CD8-positive, alpha-beta memory T cell (primary cell): ENCODE measurements at regions of chr19 and their contacts with region 1.

Region 1: DNA sequence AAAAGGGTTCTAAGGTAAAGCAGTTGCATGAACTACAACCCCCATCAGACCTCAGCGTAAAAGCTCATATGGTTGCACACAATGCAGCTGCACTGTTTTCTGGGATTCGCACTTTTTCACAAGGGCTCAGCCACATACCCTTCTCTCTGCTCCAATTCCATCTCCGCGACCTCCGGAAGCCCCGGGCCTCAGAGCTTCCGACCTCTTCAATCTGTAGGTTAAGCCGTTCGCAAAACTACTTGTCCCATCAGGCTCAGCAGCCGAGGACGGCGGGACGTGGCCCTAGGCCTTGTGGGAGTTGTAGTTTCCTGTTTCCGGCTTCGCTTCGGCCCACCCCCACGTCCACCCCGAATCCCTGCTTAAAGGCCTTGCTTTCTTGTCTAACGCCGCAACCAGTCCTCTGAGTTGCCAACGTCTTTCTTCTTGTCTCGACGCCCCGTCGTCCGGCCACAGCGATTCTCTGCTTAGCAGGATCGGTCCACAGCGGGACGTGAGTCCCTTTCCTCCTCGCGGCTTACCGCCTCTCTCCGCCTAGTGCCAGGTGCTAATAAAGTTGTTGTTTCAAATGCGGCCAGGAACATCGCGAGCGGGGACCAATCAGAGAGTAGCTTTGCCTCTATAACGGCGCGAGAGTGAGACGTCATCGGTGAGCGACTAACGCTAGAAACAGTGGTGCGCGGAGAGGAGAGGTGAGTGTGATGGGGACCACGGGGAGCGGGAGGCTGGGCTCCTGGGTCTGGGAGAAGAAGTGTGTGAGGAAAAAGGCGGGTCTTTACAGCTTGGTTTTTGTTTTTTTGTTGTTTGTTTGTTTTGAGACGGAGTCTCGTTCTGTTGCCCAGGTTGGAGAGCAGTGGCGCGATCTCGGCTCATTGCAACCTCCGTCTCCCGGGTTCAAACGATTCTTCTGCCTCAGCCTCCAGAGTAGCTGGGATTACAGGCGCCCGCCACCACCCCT is at the starts of genes PRPF31 and TFPT:
- DNase-seq: peak; percentile 90 to 98 (median 96)
- H3K4me3 ChIP-seq: peak within 1 kb of the TSS; percentile 97
- H3K4me3 Mint-ChIP-seq: peak within 1 kb of the TSS; percentile 85 to 96 (median 93)
- H3K27ac ChIP-seq: peak within 1 kb of the TSS; percentile 80
- H3K27ac Mint-ChIP-seq: peak within 1 kb of the TSS; percentile 72 to 99 (median 92)
- H3K4me1 ChIP-seq: peaks cover 28% of the 10 kb centered on the region
- H3K4me1 Mint-ChIP-seq: peaks cover 37 to 50% (median 43%) of the 10 kb centered on the region in 3 donors
- H3K27me3 ChIP-seq: no peaks in the 10 kb centered on the region
- H3K27me3 Mint-ChIP-seq: peaks cover 0 to 2% of the 10 kb centered on the region in 2 donors
- total RNA-seq, gene PRPF31: 123 to 132 TPM
- total RNA-seq, gene TFPT: 32.9 to 33.1 TPM

Region 2: GRCh38 chr19:54062643-54063042 is 52.7 kb before region 1 on chr19:
- CTCF ChIA-PET with region 1: no interaction called
- POLR2A ChIA-PET with region 1: no interaction called
- DNase-seq: no peak
- H3K4me3 ChIP-seq: no peak overlapping the region
- H3K4me3 Mint-ChIP-seq: no peak overlapping the region
- H3K27ac ChIP-seq: no peak overlapping the region
- H3K27ac Mint-ChIP-seq: no peak overlapping the region
- H3K4me1 ChIP-seq: no peaks in the 10 kb centered on the region
- H3K4me1 Mint-ChIP-seq: no peaks in the 10 kb centered on the region
- H3K27me3 ChIP-seq: no peaks in the 10 kb centered on the region
- H3K27me3 Mint-ChIP-seq: peaks cover 15 to 24% of the 10 kb centered on the region in 2 donors

Region 3: GRCh38 chr19:54096617-54097129 is 18.7 kb before region 1 on chr19:
- CTCF ChIA-PET with region 1: no interaction called
- POLR2A ChIA-PET with region 1: interaction called, 19 read pairs
- DNase-seq: peak in 2 of 5 donors; percentile 35 to 54
- H3K4me3 ChIP-seq: no peak overlapping the region
- H3K4me3 Mint-ChIP-seq: peak overlapping the region; percentile 30 to 88 (median 72)
- H3K27ac ChIP-seq: no peak overlapping the region
- H3K27ac Mint-ChIP-seq: peak overlapping the region; percentile 35 to 92 (median 78)
- H3K4me1 ChIP-seq: peaks cover 11% of the 10 kb centered on the region
- H3K4me1 Mint-ChIP-seq: peaks cover 13 to 27% (median 24%) of the 10 kb centered on the region in 3 donors
- H3K27me3 ChIP-seq: no peaks in the 10 kb centered on the region
- H3K27me3 Mint-ChIP-seq: peaks cover 9 to 10% of the 10 kb centered on the region in 2 donors

Region 4: GRCh38 chr19:54102421-54103169 is 12.8 kb before region 1 on chr19 and contains the start of gene NDUFA3:
- CTCF ChIA-PET with region 1: interaction called, 5 read pairs
- POLR2A ChIA-PET with region 1: interaction called, 19 read pairs
- DNase-seq: peak; percentile 96 to 100 (median 97)
- H3K4me3 ChIP-seq: peak within 1 kb of the TSS; percentile 91
- H3K4me3 Mint-ChIP-seq: peak within 1 kb of the TSS; percentile 86 to 100 (median 98)
- H3K27ac ChIP-seq: peak within 1 kb of the TSS; percentile 76
- H3K27ac Mint-ChIP-seq: peak within 1 kb of the TSS; percentile 65 to 99 (median 97)
- H3K4me1 ChIP-seq: peaks cover 11% of the 10 kb centered on the region
- H3K4me1 Mint-ChIP-seq: peaks cover 21 to 37% (median 30%) of the 10 kb centered on the region in 3 donors
- H3K27me3 ChIP-seq: no peaks in the 10 kb centered on the region
- H3K27me3 Mint-ChIP-seq: no peaks in the 10 kb centered on the region
- total RNA-seq, gene NDUFA3: 117 to 124 TPM

Region 5: DNA sequence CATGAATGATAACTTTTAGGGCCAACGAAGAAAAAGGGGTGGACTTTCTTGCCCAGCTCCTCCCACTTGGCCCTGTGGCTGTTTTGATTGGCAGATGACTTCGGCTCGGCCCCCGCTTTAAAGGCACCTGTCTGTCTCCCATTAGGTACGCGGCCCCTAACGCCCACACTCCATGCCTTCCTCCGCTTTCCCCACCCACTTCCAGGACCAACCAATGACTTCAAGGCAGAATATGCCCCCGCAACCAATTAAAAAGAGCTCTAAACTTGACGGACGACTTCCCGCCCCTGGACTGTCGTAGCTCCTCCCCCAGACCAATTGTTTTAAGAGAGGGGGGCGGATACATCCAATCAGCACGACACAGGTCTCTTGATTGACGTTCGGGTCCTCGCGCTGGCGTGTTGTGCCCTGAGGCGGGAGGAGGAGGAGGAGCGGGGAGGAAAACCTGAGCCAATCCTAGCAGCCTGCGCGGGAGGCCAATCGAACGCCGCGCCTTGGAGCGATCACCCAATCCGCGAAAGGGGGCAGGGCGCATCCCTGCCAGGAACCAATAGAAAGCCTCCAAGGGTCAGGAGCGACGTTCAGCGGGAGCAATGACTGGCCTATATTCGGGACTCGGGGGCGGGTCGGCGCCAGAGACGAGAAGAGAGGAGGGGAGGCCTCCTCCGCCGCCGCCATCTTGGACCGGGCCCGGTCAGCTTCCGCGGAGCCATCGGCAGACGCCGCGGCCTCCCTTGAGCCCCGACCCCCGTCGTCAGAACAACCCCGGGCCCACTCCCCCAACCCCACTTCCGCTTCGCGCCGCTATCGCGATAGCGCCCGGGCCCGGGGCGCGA is 21.9 kb after region 1 on chr19 and contains the start of gene CNOT3:
- CTCF ChIA-PET with region 1: interaction called, 7 read pairs
- POLR2A ChIA-PET with region 1: interaction called, 36 read pairs
- DNase-seq: peak; percentile 99 to 100 (median 100)
- H3K4me3 ChIP-seq: peak within 1 kb of the TSS; percentile 87
- H3K4me3 Mint-ChIP-seq: peak within 1 kb of the TSS; percentile 84 to 94 (median 90)
- H3K27ac ChIP-seq: peak within 1 kb of the TSS; percentile 90
- H3K27ac Mint-ChIP-seq: peak within 1 kb of the TSS; percentile 87 to 98 (median 92)
- H3K4me1 ChIP-seq: peaks cover 39% of the 10 kb centered on the region
- H3K4me1 Mint-ChIP-seq: peaks cover 40 to 56% (median 54%) of the 10 kb centered on the region in 3 donors
- H3K27me3 ChIP-seq: no peaks in the 10 kb centered on the region
- H3K27me3 Mint-ChIP-seq: peaks cover 0 to 1% of the 10 kb centered on the region in 2 donors
- total RNA-seq, gene CNOT3: 75.1 to 81.7 TPM

Region 6: DNA sequence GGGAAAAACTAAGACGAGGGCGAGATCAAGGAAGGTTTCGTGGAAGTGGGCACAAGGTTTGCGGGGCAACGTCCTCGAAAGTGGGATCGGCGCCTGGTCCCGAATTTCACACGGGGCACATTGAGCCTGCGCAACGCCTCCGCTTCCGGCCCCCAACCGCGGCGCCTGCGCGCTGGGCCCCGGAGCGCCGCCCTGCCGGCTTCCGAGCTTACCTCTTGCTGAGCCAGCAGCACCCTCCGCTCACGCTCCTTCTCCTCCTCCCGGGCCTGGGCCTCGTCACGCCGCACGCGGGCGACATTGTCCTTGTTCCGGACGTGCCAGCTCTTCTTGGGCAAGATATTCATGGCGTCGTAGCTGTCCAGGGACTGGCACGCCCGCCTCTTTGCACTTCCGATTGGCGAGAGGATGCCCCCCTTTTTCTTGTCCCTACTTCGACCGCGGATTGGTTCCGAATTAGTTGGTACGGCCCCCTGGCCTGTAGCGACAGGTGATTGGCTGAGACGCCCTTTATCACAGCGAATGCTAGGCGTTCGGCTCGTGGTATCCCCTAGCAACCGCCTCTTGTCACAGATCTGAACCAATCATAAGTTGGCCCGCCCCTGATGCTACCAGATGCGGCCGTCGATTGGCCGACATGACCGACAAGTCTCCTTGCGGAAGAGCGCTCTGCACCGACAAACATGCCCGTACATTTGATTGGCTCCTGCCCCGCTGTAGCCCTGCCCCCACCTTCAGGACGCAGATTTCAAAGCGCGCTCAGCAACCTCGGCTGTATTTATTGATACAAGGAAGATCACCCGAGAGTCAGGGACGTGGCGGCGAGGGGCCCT is 44.2 kb after region 1 on chr19 and contains the start of gene LENG1:
- CTCF ChIA-PET with region 1: interaction called, 4 read pairs
- POLR2A ChIA-PET with region 1: interaction called, 17 read pairs
- DNase-seq: peak; percentile 96 to 100 (median 99)
- H3K4me3 ChIP-seq: peak within 1 kb of the TSS; percentile 93
- H3K4me3 Mint-ChIP-seq: peak within 1 kb of the TSS; percentile 89 to 100 (median 99)
- H3K27ac ChIP-seq: peak within 1 kb of the TSS; percentile 85
- H3K27ac Mint-ChIP-seq: peak within 1 kb of the TSS; percentile 92 to 100 (median 99)
- H3K4me1 ChIP-seq: peaks cover 75% of the 10 kb centered on the region
- H3K4me1 Mint-ChIP-seq: peaks cover 57 to 76% (median 73%) of the 10 kb centered on the region in 3 donors
- H3K27me3 ChIP-seq: no peaks in the 10 kb centered on the region
- H3K27me3 Mint-ChIP-seq: peaks cover 4 to 6% of the 10 kb centered on the region in 2 donors
- total RNA-seq, gene LENG1: 4.8 to 6.8 TPM

Region 7: DNA sequence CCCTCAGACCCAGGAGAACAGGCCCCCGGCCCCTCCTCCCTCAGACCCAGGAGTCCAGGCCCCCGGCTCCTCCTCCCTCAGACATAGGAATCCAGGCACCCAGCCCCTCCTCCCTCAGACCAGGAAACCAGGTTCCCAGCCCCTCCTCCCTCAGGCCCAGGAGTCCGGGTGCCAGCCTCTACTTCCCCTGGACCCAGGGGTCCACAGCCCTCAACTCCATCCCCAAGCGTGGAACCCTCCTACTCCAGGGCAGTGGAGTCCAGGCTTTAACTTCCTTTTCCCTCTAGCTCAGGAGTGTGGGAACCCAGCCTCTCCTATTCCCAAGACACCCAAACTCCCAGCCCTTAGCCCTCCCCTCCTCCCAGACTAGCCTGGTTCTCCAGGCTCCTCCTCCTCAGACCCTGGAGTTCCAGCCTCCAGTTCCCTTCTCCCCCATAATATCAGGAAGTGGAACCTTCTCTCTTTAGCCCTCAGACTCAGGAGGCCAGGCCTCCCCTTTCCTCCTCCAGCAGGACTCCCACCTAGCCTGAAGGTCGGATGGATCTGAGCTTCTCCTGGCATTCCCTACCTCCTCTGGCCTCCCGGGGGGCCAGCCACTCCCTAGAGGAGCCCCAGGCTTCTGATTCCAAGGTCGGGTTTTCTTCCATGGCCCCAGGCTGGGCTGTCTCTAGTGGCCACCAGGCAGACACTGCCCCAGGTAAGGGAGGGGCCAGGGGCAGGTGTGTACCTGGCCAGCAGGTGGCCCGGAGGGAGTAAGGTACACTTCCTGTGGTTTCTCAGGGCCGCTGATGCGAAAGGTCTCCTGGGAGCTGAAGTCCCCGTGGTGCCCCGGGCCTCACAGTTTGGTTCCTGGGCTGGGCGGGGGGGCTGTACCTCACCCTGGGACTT is 57.3 kb after region 1 on chr19 and contains the start of gene TMC4:
- CTCF ChIA-PET with region 1: no interaction called
- POLR2A ChIA-PET with region 1: no interaction called
- DNase-seq: no peak
- H3K4me3 ChIP-seq: no peak within 1 kb of the TSS
- H3K4me3 Mint-ChIP-seq: peak within 1 kb of the TSS in 1 of 7 donors; percentile 65
- H3K27ac ChIP-seq: no peak within 1 kb of the TSS
- H3K27ac Mint-ChIP-seq: peak within 1 kb of the TSS in 2 of 8 donors; percentile 42 to 50
- H3K4me1 ChIP-seq: no peaks in the 10 kb centered on the region
- H3K4me1 Mint-ChIP-seq: peaks cover 0 to 6% (median 2%) of the 10 kb centered on the region in 3 donors
- H3K27me3 ChIP-seq: no peaks in the 10 kb centered on the region
- H3K27me3 Mint-ChIP-seq: no peaks in the 10 kb centered on the region
- total RNA-seq, gene TMC4: 0.18 TPM in 1 of 2 experiments, not detected in the other